CD8-positive, alpha-beta T cell (primary cell): ENCODE measurements at regions of chr3 and their contacts with region 1.

Region 1: GRCh38 chr3:49021813-49022687 is at the start of gene NDUFAF3:
- DNase-seq: peak; percentile 85 to 95 (median 93)
- ATAC-seq: peak; percentile 73
- H3K4me3 ChIP-seq: peak within 1 kb of the TSS; percentile 97 to 98
- H3K4me3 Mint-ChIP-seq: peak within 1 kb of the TSS; percentile 98
- H3K27ac ChIP-seq: peak within 1 kb of the TSS; percentile 98 to 99
- H3K27ac Mint-ChIP-seq: peak within 1 kb of the TSS; percentile 98
- H3K4me1 ChIP-seq: peaks cover 38% of the 10 kb centered on the region
- H3K4me1 Mint-ChIP-seq: peaks cover 43% of the 10 kb centered on the region
- H3K27me3 ChIP-seq: no peaks in the 10 kb centered on the region
- H3K27me3 Mint-ChIP-seq: no peaks in the 10 kb centered on the region
- CTCF ChIP-seq: peak; percentile 94
- total RNA-seq, gene NDUFAF3: 44.4 to 48.5 TPM

Region 2: GRCh38 chr3:48685602-48686511 is 336.2 kb before region 1 on chr3 and contains the start of gene NCKIPSD:
- CTCF ChIA-PET with region 1: no interaction called
- POLR2A ChIA-PET with region 1: no interaction called
- intact Hi-C with region 1: loop called in 1 of 2 experiments (anchors 10 kb)
- DNase-seq: peak; percentile 81 to 97 (median 91)
- ATAC-seq: peak; percentile 92
- H3K4me3 ChIP-seq: peak within 1 kb of the TSS; percentile 63 to 85
- H3K4me3 Mint-ChIP-seq: peak within 1 kb of the TSS; percentile 93
- H3K27ac ChIP-seq: peak within 1 kb of the TSS; percentile 58 to 82
- H3K27ac Mint-ChIP-seq: peak within 1 kb of the TSS; percentile 91
- H3K4me1 ChIP-seq: peaks cover 18% of the 10 kb centered on the region
- H3K4me1 Mint-ChIP-seq: peaks cover 22% of the 10 kb centered on the region
- H3K27me3 ChIP-seq: no peaks in the 10 kb centered on the region
- H3K27me3 Mint-ChIP-seq: no peaks in the 10 kb centered on the region
- CTCF ChIP-seq: peak; percentile 93
- total RNA-seq, gene NCKIPSD: 7.7 to 8.1 TPM

Region 3: DNA sequence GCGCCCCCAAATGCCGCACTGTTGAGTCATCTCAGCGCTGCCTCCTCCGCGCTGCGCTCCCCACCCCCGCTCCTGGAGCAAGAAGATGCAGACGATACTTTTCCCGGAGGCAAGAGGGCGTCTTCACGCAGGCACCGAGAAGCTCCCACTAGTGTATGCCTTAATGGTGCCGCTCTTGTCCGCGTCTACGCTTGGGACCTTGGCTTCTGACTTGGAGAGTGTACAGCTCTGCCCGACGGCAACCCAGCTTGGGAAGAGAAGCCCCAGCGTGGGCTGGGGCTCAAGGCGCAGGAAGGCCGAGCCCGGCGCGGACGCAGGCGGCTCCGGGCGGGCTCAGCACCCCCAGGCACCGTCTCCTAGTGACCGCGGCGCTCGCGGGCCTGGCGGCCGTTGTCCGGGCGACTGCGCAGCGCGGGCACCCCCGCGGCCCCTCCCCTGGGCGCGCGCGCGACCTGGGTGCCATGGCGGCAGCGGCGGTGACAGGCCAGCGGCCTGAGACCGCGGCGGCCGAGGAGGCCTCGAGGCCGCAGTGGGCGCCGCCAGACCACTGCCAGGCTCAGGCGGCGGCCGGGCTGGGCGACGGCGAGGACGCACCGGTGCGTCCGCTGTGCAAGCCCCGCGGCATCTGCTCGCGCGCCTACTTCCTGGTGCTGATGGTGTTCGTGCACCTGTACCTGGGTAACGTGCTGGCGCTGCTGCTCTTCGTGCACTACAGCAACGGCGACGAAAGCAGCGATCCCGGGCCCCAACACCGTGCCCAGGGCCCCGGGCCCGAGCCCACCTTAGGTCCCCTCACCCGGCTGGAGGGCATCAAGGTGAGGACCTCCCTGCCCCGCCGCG is 32.0 kb before region 1 on chr3 and contains the start of gene P4HTM:
- CTCF ChIA-PET with region 1: interaction called, 178 read pairs
- POLR2A ChIA-PET with region 1: interaction called, 46 read pairs
- intact Hi-C with region 1: loop called (anchors 1 to 2 kb)
- DNase-seq: peak; percentile 41 to 90 (median 83)
- ATAC-seq: peak; percentile 78
- H3K4me3 ChIP-seq: peak within 1 kb of the TSS; percentile 71 to 76
- H3K4me3 Mint-ChIP-seq: peak within 1 kb of the TSS; percentile 95
- H3K27ac ChIP-seq: peak within 1 kb of the TSS; percentile 68 to 72
- H3K27ac Mint-ChIP-seq: peak within 1 kb of the TSS; percentile 95
- H3K4me1 ChIP-seq: peaks cover 19% of the 10 kb centered on the region
- H3K4me1 Mint-ChIP-seq: peaks cover 45% of the 10 kb centered on the region
- H3K27me3 ChIP-seq: no peaks in the 10 kb centered on the region
- H3K27me3 Mint-ChIP-seq: no peaks in the 10 kb centered on the region
- CTCF ChIP-seq: no peak
- total RNA-seq, gene P4HTM: 41.5 to 41.8 TPM

Region 4: GRCh38 chr3:49165771-49166751 is 144.0 kb after region 1 on chr3 and contains the start of gene CCDC71:
- CTCF ChIA-PET with region 1: no interaction called
- POLR2A ChIA-PET with region 1: no interaction called
- intact Hi-C with region 1: loop called in 1 of 2 experiments (anchors 1 kb)
- DNase-seq: peak; percentile 52 to 89 (median 75)
- ATAC-seq: peak; percentile 77
- H3K4me3 ChIP-seq: peak within 1 kb of the TSS; percentile 87 to 92
- H3K4me3 Mint-ChIP-seq: peak within 1 kb of the TSS; percentile 90
- H3K27ac ChIP-seq: peak within 1 kb of the TSS; percentile 60 to 81
- H3K27ac Mint-ChIP-seq: peak within 1 kb of the TSS; percentile 93
- H3K4me1 ChIP-seq: peaks cover 28% of the 10 kb centered on the region
- H3K4me1 Mint-ChIP-seq: peaks cover 44% of the 10 kb centered on the region
- H3K27me3 ChIP-seq: no peaks in the 10 kb centered on the region
- H3K27me3 Mint-ChIP-seq: no peaks in the 10 kb centered on the region
- CTCF ChIP-seq: no peak
- total RNA-seq, gene CCDC71: 15.6 to 15.9 TPM

Region 5: DNA sequence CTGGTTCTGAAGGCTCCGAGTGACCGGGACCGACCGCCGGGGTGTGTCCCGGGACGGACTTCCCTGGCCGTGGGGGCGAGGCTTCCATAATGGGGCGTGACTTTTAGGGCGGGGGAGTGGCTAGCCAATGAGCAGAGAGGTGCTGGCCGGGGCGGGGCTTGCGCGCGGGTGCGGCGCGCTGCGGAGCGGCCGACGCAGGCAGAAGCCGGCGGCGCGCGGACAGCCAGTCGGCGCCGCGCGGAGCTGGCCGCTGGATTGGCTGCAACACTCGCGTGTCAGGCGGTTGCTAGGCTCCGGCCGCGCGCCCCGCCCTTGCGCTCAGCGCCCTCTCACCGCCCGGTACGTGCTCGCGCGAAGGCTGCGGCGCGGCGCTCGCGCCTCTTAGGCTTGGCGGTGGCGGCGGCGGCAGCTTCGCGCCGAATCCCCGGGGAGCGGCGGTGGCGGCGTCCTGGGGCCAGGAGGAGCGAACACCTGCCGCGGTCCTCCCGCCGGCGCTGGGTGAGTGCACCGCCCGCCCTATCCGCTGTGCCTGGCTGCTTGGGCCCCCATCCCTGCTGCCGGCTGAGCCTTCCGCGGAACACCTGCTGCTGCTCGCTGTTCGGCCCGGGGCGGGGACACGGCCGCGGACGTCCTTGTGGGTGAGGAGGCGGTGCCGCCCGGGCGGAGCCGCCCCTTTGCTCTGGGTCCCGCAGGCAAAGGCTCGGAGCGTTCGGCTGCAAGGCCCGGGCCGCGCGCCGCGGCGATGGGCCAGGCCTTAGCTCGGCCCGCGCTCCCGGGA is 448.1 kb after region 1 on chr3 and contains the start of gene DAG1:
- CTCF ChIA-PET with region 1: no interaction called
- POLR2A ChIA-PET with region 1: no interaction called
- intact Hi-C with region 1: loop called in 1 of 2 experiments (anchors 10 kb)
- DNase-seq: peak; percentile 89 to 99 (median 95)
- ATAC-seq: peak; percentile 85
- H3K4me3 ChIP-seq: peak within 1 kb of the TSS; percentile 83 to 97
- H3K4me3 Mint-ChIP-seq: peak within 1 kb of the TSS; percentile 88
- H3K27ac ChIP-seq: peak within 1 kb of the TSS; percentile 86 to 87
- H3K27ac Mint-ChIP-seq: peak within 1 kb of the TSS; percentile 94
- H3K4me1 ChIP-seq: peaks cover 21% of the 10 kb centered on the region
- H3K4me1 Mint-ChIP-seq: peaks cover 24% of the 10 kb centered on the region
- H3K27me3 ChIP-seq: no peaks in the 10 kb centered on the region
- H3K27me3 Mint-ChIP-seq: no peaks in the 10 kb centered on the region
- CTCF ChIP-seq: no peak
- total RNA-seq, gene DAG1: 17.0 to 19.9 TPM